A549 (cell line): ENCODE measurements at regions of chr12 and their contacts with region 1.

Region 1: DNA sequence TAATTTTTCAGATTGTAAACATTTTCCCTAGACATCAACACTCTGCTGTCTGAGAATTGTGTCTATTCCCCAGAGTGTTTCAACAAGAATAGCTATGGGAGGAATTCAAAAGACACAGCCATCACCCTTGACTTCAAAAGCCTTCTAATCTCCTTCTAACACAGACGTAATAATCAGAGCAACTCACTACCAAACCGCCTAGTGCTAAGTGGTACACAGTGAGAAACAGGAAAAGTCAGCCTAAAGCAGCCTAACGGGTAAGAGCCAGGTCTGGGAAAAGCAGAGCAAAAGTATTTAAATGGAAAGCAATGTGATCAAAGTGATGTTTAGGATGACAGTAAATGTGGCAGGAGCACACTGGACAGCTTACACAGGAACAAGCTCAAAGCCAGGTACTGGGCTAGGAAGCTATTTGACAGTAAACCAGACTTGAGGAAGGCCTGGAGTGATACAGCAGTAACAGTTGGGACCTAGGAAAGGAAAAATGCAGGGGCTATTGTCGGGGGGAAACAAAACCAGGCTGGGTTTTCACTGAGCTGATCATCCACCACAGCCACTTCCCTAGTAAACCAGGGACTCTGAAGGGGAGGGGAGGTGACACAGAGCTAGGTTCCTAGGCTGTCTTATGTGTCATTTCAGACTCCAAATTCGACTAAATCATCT is 29.4 kb downstream of the CORO1C start:
- DNase-seq: no peak
- ATAC-seq: peak; percentile 39 to 47; a peak in 4 of 6 replicates
- H3K4me3 ChIP-seq: no peak overlapping the region
- H3K27ac ChIP-seq: peak overlapping the region in 1 of 2 experiments; percentile 48; a peak in 1 of 6 replicates
- H3K4me1 ChIP-seq: peaks cover 40% of the 10 kb centered on the region
- CTCF ChIP-seq: no peak
- EP300 ChIP-seq: no peak
- POLR2A ChIP-seq: no peak
- RAD21 ChIP-seq: no peak

Region 2: GRCh38 chr12:108457006-108457733 is 244.7 kb before region 1 on chr12:
- CTCF ChIA-PET with region 1: no interaction called
- POLR2A ChIA-PET with region 1: no interaction called
- DNase-seq: peak; percentile 68 to 71
- ATAC-seq: peak; percentile 77 to 97
- H3K4me3 ChIP-seq: no peak overlapping the region
- H3K27ac ChIP-seq: no peak overlapping the region
- H3K4me1 ChIP-seq: no peaks in the 10 kb centered on the region
- CTCF ChIP-seq: peak; percentile 58
- EP300 ChIP-seq: no peak
- POLR2A ChIP-seq: no peak
- RAD21 ChIP-seq: peak; percentile 56 to 74

Region 3: DNA sequence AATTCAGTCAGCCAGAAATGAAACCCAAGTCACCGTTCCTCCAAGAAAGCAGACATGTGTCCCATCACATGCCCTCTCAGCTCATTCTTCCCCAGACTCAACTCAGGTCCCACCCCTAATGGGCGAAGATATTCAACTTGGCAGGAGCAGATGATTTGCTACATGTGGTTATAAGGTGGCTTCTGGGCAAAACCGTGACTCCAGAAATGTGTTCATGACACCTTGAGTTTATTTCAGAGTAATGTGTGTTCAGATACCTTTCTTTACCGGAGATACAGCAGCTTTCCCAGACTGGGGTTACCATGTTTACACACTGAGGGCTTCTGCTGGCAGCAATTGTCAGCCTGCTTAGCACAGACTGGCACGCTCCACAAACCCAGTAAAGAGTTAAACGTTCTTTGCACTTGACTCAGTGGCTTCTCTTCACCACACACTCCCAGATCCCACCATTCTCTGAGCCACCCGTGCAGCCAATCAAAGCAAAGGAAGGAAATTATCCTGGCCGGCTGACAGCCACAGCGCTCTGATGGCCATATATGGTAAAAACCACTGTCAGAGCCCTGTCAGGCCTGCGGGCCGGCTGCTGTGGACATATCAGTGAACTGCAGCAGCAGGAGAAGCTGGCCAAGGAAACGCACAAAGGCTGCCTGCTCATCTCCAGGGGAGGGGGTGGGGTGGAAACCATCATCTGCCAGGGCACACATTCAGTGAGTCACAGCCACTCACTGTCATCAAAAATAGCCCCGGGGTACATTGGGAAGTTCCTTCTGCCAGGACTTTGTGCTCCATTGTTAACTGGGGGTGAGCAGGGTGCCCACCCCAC is 10.5 kb before region 1 on chr12:
- CTCF ChIA-PET with region 1: interaction called, 10 read pairs
- POLR2A ChIA-PET with region 1: no interaction called
- DNase-seq: peak; percentile 93 to 99
- ATAC-seq: peak; percentile 95 to 97
- H3K4me3 ChIP-seq: peak overlapping the region; percentile 37
- H3K27ac ChIP-seq: peak overlapping the region; percentile 91
- H3K4me1 ChIP-seq: peaks cover 71% of the 10 kb centered on the region
- CTCF ChIP-seq: no peak
- EP300 ChIP-seq: peak; percentile 40; a peak in 1 of 5 replicates
- POLR2A ChIP-seq: peak; percentile 13; the same call in 1 of the 2 replicates
- RAD21 ChIP-seq: peak in 1 of 2 experiments; percentile 23; a peak in 1 of 5 replicates